ENCODE measurements at regions of chr14 and their contacts with region 1.

Region 1: GRCh38 chr14:70995676-70996075 is 88.4 kb downstream of the PCNX1 start:
- DNase-seq: no peak
- ATAC-seq: no peak
- H3K4me3 ChIP-seq: no peak overlapping the region
- H3K4me3 Mint-ChIP-seq: peak overlapping the region in 9 of 10 donors; percentile 2 to 74 (median 41)
- H3K27ac ChIP-seq: peak overlapping the region; percentile 22
- H3K27ac Mint-ChIP-seq: peak overlapping the region in 7 of 9 donors; percentile 22 to 90 (median 62)
- H3K4me1 ChIP-seq: peaks cover 32 to 48% of the 10 kb centered on the region in 2 donors
- H3K4me1 Mint-ChIP-seq: peaks cover 14 to 77% (median 72%) of the 10 kb centered on the region in 7 donors
- H3K27me3 ChIP-seq: no peaks in the 10 kb centered on the region
- H3K27me3 Mint-ChIP-seq: no peaks in the 10 kb centered on the region

Region 2: DNA sequence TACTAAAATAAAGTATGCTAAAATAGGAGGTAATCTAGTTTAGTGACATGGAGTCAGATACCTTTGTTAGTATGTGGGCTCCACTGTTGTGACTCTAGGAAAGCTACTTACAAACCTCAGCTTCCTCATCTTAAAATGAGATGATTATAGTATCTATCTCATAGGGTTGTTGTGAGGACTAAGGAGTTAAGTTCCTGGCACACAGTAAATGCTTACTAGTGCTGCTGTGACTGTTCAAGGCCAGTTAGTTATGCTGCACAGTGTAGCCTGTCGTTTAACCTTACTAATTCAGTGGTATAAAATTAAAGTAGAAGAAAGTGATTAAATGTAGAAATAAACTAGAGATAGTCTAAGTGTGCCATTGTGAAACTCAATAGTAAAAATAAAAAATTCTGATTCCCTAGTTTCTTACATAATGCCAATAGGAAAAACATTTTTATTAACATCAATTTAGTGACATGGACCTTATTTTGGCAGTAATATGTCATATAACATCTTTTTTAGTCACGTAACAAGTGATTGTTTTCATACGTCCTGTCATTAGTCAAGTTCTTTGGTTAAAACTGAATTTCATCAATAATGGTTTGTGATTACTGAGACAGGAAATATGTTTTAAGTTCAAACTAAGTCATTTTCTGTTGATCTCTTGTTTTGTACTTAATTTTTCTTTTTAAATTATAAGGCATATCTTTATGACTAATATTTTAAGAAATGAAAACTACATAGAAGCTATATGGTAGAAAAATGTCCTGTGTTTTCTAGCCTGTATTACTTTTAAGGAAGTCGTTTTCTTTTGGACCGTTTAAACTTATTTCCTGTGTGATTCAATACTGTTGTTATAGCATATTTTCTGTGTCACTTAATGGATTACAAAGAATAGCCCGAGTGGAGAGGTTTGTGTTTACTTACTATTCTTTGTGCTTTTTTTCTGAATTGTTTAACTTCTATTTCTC is 14.4 kb before region 1 on chr14:
- CTCF ChIA-PET with region 1: interaction called, 7 read pairs
- POLR2A ChIA-PET with region 1: interaction called, 4 read pairs
- intact Hi-C with region 1: loop called in 1 of 2 experiments (anchors 2 kb)
- DNase-seq: peak in 1 of 9 donors; percentile 14
- ATAC-seq: peak; percentile 65
- H3K4me3 ChIP-seq: peak overlapping the region; percentile 36
- H3K4me3 Mint-ChIP-seq: peak overlapping the region in 9 of 10 donors; percentile 9 to 83 (median 70)
- H3K27ac ChIP-seq: peak overlapping the region; percentile 50
- H3K27ac Mint-ChIP-seq: peak overlapping the region; percentile 21 to 91 (median 86)
- H3K4me1 ChIP-seq: peaks cover 32 to 37% of the 10 kb centered on the region in 2 donors
- H3K4me1 Mint-ChIP-seq: peaks cover 21 to 79% (median 65%) of the 10 kb centered on the region in 7 donors
- H3K27me3 ChIP-seq: no peaks in the 10 kb centered on the region
- H3K27me3 Mint-ChIP-seq: no peaks in the 10 kb centered on the region

Region 3: DNA sequence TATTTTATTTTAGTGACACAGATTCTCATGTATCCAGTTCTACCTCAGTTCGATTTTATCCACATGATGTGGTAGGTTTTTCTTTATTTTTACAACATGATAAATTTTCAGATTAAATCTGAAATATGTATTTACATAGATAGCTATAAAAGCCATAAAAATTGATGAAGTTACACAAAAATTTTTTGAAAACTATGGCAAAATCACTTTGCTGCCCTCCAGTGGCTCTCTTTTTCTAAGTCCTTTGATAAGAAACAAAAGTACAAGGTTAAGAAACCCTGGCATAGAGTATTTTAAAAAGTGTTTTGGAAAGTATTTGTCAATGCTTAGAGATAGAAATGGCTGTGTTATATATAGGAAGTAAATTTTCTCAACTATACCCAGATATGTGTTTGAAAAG is 15.8 kb after region 1 on chr14:
- CTCF ChIA-PET with region 1: interaction called, 4 read pairs
- POLR2A ChIA-PET with region 1: interaction called, 6 read pairs
- intact Hi-C with region 1: loop called in 1 of 2 experiments (anchors 1 kb)
- DNase-seq: peak in 3 of 9 donors; percentile 16 to 24 (median 21)
- ATAC-seq: no peak
- H3K4me3 ChIP-seq: no peak overlapping the region
- H3K4me3 Mint-ChIP-seq: peak overlapping the region in 3 of 10 donors; percentile 6 to 54 (median 36)
- H3K27ac ChIP-seq: no peak overlapping the region
- H3K27ac Mint-ChIP-seq: peak overlapping the region in 6 of 9 donors; percentile 19 to 72 (median 48)
- H3K4me1 ChIP-seq: peaks cover 0 to 24% of the 10 kb centered on the region in 2 donors
- H3K4me1 Mint-ChIP-seq: peaks cover 12 to 67% (median 58%) of the 10 kb centered on the region in 7 donors
- H3K27me3 ChIP-seq: no peaks in the 10 kb centered on the region
- H3K27me3 Mint-ChIP-seq: no peaks in the 10 kb centered on the region

Region 4: GRCh38 chr14:72060917-72061316 is 1065.2 kb after region 1 on chr14:
- CTCF ChIA-PET with region 1: no interaction called
- POLR2A ChIA-PET with region 1: no interaction called
- intact Hi-C with region 1: no loop called
- DNase-seq: no peak
- ATAC-seq: no peak
- H3K4me3 ChIP-seq: no peak overlapping the region
- H3K4me3 Mint-ChIP-seq: no peak overlapping the region
- H3K27ac ChIP-seq: no peak overlapping the region
- H3K27ac Mint-ChIP-seq: no peak overlapping the region
- H3K4me1 ChIP-seq: no peaks in the 10 kb centered on the region
- H3K4me1 Mint-ChIP-seq: no peaks in the 10 kb centered on the region
- H3K27me3 ChIP-seq: no peaks in the 10 kb centered on the region
- H3K27me3 Mint-ChIP-seq: peaks cover 3 to 12% (median 9%) of the 10 kb centered on the region in 5 donors

Measured in naive thymus-derived CD4-positive, alpha-beta T cell (primary cell).